PC-9 (cell line): ENCODE measurements at regions of chr17 and their contacts with region 1.

Region 1: DNA sequence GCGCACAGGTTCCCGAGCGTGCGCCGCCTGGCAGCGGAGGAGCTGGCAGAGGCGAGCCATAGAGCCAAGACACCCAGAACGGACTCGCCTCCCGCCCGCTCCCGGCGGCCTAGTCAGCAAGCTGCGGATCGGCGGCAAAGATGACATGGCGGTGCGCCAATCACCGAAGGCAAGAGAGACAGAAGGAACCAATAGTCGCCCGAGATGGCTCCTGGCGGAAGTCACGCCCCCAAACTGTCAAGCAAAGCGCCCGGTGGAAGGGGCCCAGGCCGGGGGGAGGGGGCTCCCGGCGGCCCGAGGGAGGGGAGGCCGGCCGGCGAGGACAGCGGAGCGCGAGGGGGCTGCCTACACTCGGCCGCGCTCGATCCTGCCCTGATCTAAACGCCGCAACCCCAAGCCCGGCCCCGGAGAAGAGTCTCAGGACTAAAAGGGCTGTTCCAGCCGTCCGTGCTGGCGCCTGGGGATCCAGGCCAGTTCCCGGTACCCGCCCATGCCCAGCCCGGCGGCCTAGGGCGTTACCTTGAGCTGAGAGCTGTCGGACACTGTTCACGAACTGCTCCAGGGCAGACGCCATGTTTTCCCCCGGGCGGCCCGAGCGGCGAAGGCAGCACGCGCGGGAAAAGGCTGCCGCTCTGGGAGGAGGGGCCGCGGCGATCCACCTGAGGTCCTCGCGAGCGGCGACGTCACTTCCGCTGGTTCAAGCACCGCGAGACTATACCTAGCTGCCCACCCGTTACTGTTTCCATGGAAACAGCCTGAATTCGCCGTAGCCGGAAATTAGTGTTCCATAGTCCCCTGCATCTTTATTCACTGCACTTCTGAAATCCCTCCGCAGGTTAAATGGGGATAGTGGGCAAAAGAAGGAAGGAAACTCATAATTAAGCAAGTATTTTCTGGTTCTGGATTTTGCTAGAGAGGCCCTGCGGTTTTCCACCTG is at the start of gene COPS3:
- DNase-seq: peak; percentile 94 to 95
- H3K4me3 ChIP-seq: peak within 1 kb of the TSS; percentile 87
- H3K27ac ChIP-seq: peak within 1 kb of the TSS; percentile 58
- H3K4me1 ChIP-seq: peaks cover 12% of the 10 kb centered on the region
- H3K27me3 ChIP-seq: no peaks in the 10 kb centered on the region
- CTCF ChIP-seq: no peak
- total RNA-seq, gene COPS3: 57.7 and 87.6 TPM in 2 replicates

Region 2: DNA sequence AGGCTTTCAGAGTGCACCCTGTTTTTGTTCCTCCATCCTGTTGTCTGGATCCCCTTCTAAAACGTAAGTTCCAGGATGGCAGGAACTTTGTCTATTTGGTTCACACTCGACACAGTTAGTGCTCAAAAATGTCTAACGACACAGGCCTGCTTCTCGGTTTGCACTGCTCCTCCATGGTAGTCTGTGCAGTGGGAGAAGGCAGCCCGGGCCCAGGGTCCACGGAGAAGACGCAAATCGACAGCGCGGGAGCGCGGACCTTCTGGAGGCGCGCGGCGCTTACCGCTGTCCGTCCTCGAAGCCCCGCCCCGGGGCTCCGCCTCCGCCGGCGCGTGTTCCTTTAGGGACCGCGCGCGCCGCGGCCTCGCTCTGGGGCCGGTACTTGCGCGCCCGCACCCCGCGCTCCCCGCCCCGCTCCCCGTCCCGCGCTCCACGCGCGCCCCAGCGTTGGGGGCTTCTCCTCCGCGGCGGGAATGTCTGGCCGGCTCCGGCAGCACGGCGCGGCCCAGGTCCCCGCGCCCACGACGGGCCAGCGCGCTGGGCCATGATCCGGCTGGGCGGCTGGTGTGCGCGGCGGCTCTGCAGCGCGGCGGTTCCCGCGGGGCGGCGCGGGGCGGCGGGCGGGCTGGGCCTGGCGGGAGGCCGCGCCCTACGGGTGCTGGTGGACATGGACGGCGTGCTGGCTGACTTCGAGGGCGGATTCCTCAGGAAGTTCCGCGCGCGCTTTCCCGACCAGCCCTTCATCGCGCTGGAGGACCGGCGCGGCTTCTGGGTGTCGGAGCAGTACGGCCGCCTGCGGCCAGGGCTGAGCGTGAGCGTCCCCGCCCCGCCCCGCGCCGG is 22.3 kb after region 1 on chr17 and contains the start of gene NT5M:
- CTCF ChIA-PET with region 1: interaction called, 4 read pairs
- POLR2A ChIA-PET with region 1: no interaction called
- intact Hi-C with region 1: loop called (anchors 1 kb)
- DNase-seq: peak; percentile 53 to 67
- H3K4me3 ChIP-seq: peak within 1 kb of the TSS; percentile 79
- H3K27ac ChIP-seq: no peak within 1 kb of the TSS
- H3K4me1 ChIP-seq: peaks cover 6% of the 10 kb centered on the region; the same call in 1 of the 2 replicates
- H3K27me3 ChIP-seq: no peaks in the 10 kb centered on the region
- CTCF ChIP-seq: no peak
- total RNA-seq, gene NT5M: 6.2 and 9.6 TPM in 2 replicates

Region 3: DNA sequence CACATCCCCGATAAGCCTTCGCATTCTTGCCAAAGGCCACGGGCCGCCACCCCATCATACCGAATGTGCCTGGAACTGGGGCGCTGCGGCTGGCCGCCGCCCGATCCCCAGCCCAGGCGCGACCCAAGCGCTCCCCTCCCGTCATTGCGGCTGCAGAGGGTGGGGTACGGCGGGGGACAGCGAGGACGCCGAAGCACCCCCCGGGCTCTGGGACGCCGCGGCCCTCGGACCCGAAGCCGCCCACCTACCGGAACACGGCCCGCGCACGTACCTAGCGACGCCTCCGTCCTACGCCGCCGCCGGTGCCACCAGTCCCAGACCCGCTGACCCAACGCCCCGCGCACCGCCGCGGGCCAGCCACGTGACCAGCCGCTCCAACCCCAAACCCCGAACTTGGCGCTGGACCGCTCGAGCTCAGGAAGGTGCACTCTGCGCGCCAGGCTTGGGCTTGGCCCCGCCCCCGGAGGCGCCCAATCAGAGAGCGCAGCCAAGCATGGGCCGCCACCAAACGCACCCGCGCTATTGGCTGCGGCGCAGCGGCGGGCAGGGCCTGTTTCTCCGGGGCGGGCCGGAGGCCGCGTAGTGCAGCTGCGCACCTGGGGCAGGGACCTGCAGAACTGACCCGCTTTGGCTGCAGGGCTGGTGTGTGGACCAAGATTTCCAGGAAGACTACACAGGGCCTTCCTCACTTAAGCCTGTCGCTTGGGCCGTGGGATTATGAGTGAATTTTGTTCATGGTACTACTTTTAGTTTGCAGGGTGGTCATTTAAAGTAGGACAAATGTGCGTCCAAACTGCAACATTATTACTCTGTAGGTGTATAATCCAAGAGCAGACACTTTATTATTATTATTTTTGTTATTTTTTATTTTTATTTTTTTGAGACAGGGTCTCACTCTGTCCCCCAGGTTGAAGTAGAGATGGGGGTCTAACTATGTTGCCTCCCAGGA is 1082.5 kb after region 1 on chr17 and contains the start of gene SHMT1:
- CTCF ChIA-PET with region 1: interaction called, 17 read pairs
- POLR2A ChIA-PET with region 1: no interaction called
- intact Hi-C with region 1: no loop called
- DNase-seq: peak; percentile 88 to 99
- H3K4me3 ChIP-seq: peak within 1 kb of the TSS; percentile 75
- H3K27ac ChIP-seq: peak within 1 kb of the TSS; percentile 24; the same call in 1 of the 2 replicates
- H3K4me1 ChIP-seq: peaks cover 10% of the 10 kb centered on the region
- H3K27me3 ChIP-seq: no peaks in the 10 kb centered on the region
- CTCF ChIP-seq: no peak
- total RNA-seq, gene SHMT1: 139 and 170 TPM in 2 replicates